ENCODE measurements at regions of chr19 and their contacts with region 1.

Region 1: DNA sequence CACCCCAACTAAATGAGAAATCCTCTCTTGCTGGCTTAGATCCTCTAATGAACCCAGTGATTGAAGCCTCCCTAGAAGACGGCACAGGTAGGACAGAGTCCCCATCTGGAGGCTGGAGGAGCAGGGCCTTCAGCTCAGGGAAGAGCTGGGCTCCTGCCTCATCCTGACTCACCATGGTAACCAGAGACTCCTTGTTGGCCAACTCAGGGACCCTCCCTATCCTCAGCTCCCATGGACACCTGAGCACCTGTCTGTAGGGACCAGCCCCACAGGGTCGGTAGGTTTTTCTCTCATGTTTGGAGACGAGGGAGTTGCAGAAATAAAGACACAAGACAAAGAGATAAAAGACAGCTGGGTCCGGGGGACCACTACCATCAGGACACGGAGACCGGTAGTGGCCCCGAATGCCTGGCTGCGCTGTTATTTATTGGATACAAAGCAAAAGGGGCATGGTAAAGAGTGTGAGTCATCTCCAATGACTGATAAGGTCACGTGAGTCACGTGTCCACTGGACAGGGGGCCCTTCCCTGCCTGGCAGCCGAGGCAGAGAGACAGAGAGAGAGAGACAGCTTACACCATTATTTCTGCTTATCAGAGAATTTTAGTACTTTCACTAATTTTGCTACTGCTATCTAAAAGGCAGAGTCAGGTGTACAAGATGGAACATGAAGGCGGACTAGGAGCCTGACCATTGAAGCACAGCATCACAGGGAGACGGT is 26.6 kb downstream of the SIGLEC7 start:
- DNase-seq: no peak
- H3K4me3 Mint-ChIP-seq: peak overlapping the region; percentile 32
- H3K27ac Mint-ChIP-seq: no peak overlapping the region
- H3K4me1 Mint-ChIP-seq: peaks cover 35% of the 10 kb centered on the region
- H3K27me3 Mint-ChIP-seq: peaks cover 31% of the 10 kb centered on the region

Region 2: GRCh38 chr19:51158474-51159129 is 10.1 kb before region 1 on chr19:
- CTCF ChIA-PET with region 1: interaction called, 22 read pairs
- DNase-seq: peak; percentile 88
- H3K4me3 Mint-ChIP-seq: no peak overlapping the region
- H3K27ac Mint-ChIP-seq: peak overlapping the region; percentile 46
- H3K4me1 Mint-ChIP-seq: peaks cover 8% of the 10 kb centered on the region
- H3K27me3 Mint-ChIP-seq: peaks cover 41% of the 10 kb centered on the region

Region 3: GRCh38 chr19:51203916-51204315 is 35.2 kb after region 1 on chr19:
- CTCF ChIA-PET with region 1: no interaction called
- DNase-seq: no peak
- H3K4me3 Mint-ChIP-seq: no peak overlapping the region
- H3K27ac Mint-ChIP-seq: no peak overlapping the region
- H3K4me1 Mint-ChIP-seq: peaks cover 6% of the 10 kb centered on the region
- H3K27me3 Mint-ChIP-seq: peaks cover 49% of the 10 kb centered on the region

Measured in activated naive CD4-positive, alpha-beta T cell treated with anti-CD3 and anti-CD28 coated beads, Interleukin-2, amount 10 ng/mL, durations not matched to agents 7 days and 5 days (primary cell).